ENCODE measurements at regions of chr5 and their contacts with region 1.

Region 1: GRCh38 chr5:132064738-132065331 is 4.4 kb downstream of the IL3 start:
- DNase-seq: peak; percentile 70
- ATAC-seq: peak; percentile 93
- H3K4me3 ChIP-seq: no peak overlapping the region
- H3K27ac ChIP-seq: no peak overlapping the region
- H3K4me1 ChIP-seq: 0 out of 2 replicates have a peak, but pooled peaks cover 2% of the 10 kb centered on the region
- H3K27me3 ChIP-seq: no peaks in the 10 kb centered on the region
- CTCF ChIP-seq: peak; percentile 86
- POLR2A ChIP-seq: no peak
- RAD21 ChIP-seq: peak; percentile 80

Region 2: DNA sequence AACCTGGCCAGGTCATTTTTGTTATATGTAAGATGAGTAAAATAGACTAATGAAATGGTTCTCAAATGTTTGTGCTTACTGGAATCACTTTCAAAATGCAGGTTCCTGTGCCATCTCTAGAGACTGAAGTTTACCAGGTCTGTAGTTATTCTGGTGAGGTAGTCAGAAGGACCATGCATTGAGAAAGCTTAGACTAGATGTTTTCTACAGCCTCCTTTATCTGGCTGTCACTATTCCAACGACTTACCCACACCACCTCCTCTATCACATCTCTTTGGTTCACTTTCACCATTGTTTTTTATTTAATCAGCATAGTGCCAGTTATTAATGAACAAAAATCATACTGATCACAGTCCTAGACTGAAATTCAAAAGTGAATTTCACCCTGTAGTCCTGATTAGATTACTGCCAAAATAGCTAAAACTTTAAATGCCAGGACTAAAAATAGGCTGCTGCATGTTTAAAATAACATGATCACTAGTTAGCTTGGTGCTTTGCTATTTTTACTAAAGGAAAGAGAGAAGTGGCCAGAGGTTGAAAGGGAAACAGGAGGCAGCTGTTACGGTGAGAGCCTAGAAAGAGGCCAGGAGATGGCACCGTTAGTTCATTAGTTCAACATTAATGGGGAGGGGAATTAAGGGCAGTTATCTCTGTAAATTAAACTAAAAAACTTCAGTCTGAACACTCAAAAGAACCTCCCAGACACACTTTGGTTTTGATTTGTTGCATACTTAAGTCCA is 254.2 kb before region 1 on chr5:
- CTCF ChIA-PET with region 1: interaction called, 3 read pairs
- POLR2A ChIA-PET with region 1: no interaction called
- dilution Hi-C with region 1: no loop called
- in situ Hi-C with region 1: no loop called
- intact Hi-C with region 1: loop called (anchors 2 kb)
- DNase-seq: peak; percentile 41
- ATAC-seq: peak; percentile 64
- H3K4me3 ChIP-seq: no peak overlapping the region
- H3K27ac ChIP-seq: no peak overlapping the region
- H3K4me1 ChIP-seq: 0 out of 2 replicates have a peak, but pooled peaks cover 2% of the 10 kb centered on the region
- H3K27me3 ChIP-seq: no peaks in the 10 kb centered on the region
- CTCF ChIP-seq: peak; percentile 48
- POLR2A ChIP-seq: no peak
- RAD21 ChIP-seq: peak; percentile 44

Region 3: DNA sequence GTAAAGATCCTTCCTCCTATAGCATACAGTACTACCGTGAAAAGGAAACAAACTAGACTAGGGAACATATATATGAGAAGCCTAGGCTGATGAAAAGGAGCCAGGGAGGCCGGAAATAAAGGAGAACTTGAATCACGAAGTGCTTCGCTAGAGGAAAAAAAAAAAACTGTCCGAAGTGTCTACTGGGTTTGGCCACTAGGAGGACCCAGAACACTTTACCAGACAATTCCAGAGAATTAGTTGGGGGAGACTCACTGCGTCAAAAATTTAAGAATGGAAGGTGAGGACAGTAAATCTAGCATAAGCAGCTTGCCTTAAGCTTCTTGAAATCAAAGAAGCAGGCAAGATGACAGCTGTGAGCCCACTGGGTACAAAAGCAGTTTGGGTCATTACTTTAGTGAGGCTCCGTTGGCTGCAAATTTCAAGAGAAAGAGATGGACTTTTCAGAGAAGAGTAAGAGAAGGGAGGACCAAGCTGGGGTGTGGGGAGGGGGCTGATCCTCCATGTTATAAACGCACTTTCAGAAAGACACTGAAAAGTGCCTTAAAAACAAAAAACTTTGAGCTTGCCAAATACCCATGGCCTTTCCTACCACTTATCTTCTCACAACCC is 115.4 kb after region 1 on chr5:
- CTCF ChIA-PET with region 1: interaction called, 3 read pairs
- POLR2A ChIA-PET with region 1: no interaction called
- dilution Hi-C with region 1: no loop called
- in situ Hi-C with region 1: loop called (anchors 5 kb)
- intact Hi-C with region 1: loop called (anchors 2 kb)
- DNase-seq: peak; percentile 74
- ATAC-seq: peak; percentile 75
- H3K4me3 ChIP-seq: no peak overlapping the region
- H3K27ac ChIP-seq: no peak overlapping the region
- H3K4me1 ChIP-seq: peaks cover 2% of the 10 kb centered on the region; the same call in 1 of the 2 replicates
- H3K27me3 ChIP-seq: no peaks in the 10 kb centered on the region
- CTCF ChIP-seq: peak; percentile 88
- POLR2A ChIP-seq: no peak
- RAD21 ChIP-seq: peak; percentile 72

Region 4: DNA sequence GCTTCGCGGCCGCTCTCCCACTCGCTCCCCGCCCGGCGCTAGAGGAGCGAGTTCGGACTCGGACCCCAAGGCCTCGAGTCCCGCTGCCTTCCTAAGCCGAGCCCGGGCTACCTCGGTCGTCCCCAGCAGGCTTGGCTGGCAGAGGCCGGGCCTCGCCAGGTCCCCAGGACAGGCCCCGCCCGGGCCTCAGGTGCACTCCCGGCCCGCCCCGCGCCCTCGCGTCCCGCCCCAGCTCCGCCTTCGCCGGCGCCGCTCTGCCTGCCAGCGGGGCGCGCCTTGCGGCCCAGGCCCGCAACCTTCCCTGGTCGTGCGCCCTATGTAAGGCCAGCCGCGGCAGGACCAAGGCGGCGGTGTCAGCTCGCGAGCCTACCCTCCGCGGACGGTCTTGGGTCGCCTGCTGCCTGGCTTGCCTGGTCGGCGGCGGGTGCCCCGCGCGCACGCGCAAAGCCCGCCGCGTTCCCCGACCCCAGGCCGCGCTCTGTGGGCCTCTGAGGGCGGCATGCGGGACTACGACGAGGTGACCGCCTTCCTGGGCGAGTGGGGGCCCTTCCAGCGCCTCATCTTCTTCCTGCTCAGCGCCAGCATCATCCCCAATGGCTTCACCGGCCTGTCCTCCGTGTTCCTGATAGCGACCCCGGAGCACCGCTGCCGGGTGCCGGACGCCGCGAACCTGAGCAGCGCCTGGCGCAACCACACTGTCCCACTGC is 304.8 kb after region 1 on chr5 and contains the start of gene SLC22A5:
- CTCF ChIA-PET with region 1: interaction called, 3 read pairs
- POLR2A ChIA-PET with region 1: no interaction called
- dilution Hi-C with region 1: no loop called
- in situ Hi-C with region 1: loop called (anchors 10 kb)
- intact Hi-C with region 1: loop called (anchors 5 kb)
- DNase-seq: peak; percentile 33
- ATAC-seq: peak; percentile 85
- H3K4me3 ChIP-seq: peak within 1 kb of the TSS; percentile 88
- H3K27ac ChIP-seq: peak within 1 kb of the TSS; percentile 54; the same call in 1 of the 2 replicates
- H3K4me1 ChIP-seq: peaks cover 11% of the 10 kb centered on the region
- H3K27me3 ChIP-seq: no peaks in the 10 kb centered on the region
- CTCF ChIP-seq: no peak
- POLR2A ChIP-seq: peak; percentile 50; the same call in 1 of the 2 replicates
- RAD21 ChIP-seq: no peak
- total RNA-seq, gene SLC22A5: 3.6 and 6.1 TPM in 2 replicates

Measured in IMR-90 (cell line).